ENCODE measurements at regions of chr15 and their contacts with region 1.

Region 1: DNA sequence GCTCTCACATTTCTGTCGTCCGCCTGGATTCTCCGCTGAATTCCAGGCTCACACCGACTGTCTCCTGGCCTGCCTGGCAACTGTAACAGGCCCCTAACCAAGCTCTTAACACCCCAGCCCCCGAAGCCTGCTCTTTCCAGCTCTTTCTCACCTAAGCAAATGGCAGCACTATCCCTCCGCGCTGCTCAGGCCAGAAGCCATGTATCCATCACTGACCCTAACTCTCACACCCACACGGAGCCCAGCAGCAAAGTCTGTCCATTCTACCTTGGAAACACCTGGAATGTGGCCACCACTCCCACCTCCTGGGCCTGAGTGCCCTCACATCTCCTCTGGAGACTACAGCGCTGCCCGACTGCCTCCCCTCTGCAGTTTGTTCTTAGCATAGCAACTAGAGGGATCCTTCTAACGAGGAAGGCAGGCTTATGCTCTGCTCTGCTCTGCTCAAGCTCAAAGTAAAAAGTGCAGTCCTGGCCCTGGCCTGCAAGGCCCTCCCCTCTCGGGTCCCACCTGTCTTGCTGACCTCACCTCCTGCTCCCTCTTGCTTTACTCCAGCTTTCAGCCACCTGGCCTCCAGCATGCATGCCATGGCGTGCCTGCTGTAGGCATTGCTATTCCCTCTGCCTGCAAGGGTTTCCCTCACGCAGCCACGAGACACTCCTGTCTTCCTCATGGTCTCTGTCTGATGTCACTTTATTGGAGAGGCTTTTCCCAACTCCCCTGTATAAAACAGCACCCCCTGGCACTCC is 27.2 kb downstream of the FEM1B start:
- DNase-seq: peak in 1 of 2 experiments; percentile 63
- H3K4me3 ChIP-seq: no peak overlapping the region
- H3K27ac ChIP-seq: no peak overlapping the region
- H3K4me1 ChIP-seq: peaks cover 7 to 23% (median 17%) of the 10 kb centered on the region in 4 experiments
- H3K27me3 ChIP-seq: no peaks in the 10 kb centered on the region
- CTCF ChIP-seq: peak; percentile 36 to 69 (median 47)
- EP300 ChIP-seq: no peak
- POLR2A ChIP-seq: no peak; a peak in 1 of 3 replicates
- RAD21 ChIP-seq: peak; percentile 31 to 55

Region 2: GRCh38 chr15:68252925-68253534 is 51.7 kb before region 1 on chr15:
- CTCF ChIA-PET with region 1: interaction called, 199 read pairs
- POLR2A ChIA-PET with region 1: interaction called, 6 read pairs
- DNase-seq: no peak
- H3K4me3 ChIP-seq: no peak overlapping the region
- H3K27ac ChIP-seq: no peak overlapping the region
- H3K4me1 ChIP-seq: peaks cover 0 to 8% (median 6%) of the 10 kb centered on the region in 4 experiments; a peak in 4 of 7 replicates
- H3K27me3 ChIP-seq: no peaks in the 10 kb centered on the region
- CTCF ChIP-seq: peak in 2 of 3 experiments; percentile 72 to 83; a peak in 3 of 4 replicates
- EP300 ChIP-seq: no peak
- POLR2A ChIP-seq: no peak
- RAD21 ChIP-seq: peak; percentile 91 to 93

Region 3: GRCh38 chr15:68277603-68278344 is 27.0 kb before region 1 on chr15 and contains the start of gene FEM1B:
- CTCF ChIA-PET with region 1: interaction called, 15 read pairs
- POLR2A ChIA-PET with region 1: interaction called, 37 read pairs
- DNase-seq: peak; percentile 75 to 92
- H3K4me3 ChIP-seq: peak within 1 kb of the TSS; percentile 78 to 99 (median 89)
- H3K27ac ChIP-seq: peak within 1 kb of the TSS; percentile 94
- H3K4me1 ChIP-seq: peaks cover 5 to 18% (median 14%) of the 10 kb centered on the region in 4 experiments; a peak in 6 of 7 replicates
- H3K27me3 ChIP-seq: no peaks in the 10 kb centered on the region
- CTCF ChIP-seq: peak in 1 of 3 experiments; percentile 8; a peak in 1 of 4 replicates
- EP300 ChIP-seq: peak in 1 of 2 experiments; percentile 68; a peak in 1 of 3 replicates
- POLR2A ChIP-seq: peak; percentile 54 to 88; a peak in 2 of 3 replicates
- RAD21 ChIP-seq: no peak
- total RNA-seq, gene FEM1B: 72.9 and 83.8 TPM in 2 replicates

Region 4: GRCh38 chr15:68341760-68342725 is 37.3 kb after region 1 on chr15:
- CTCF ChIA-PET with region 1: interaction called, 28 read pairs
- POLR2A ChIA-PET with region 1: no interaction called
- DNase-seq: no peak
- H3K4me3 ChIP-seq: no peak overlapping the region
- H3K27ac ChIP-seq: no peak overlapping the region
- H3K4me1 ChIP-seq: no peaks in the 10 kb centered on the region; a peak in 1 of 7 replicates
- H3K27me3 ChIP-seq: no peaks in the 10 kb centered on the region
- CTCF ChIP-seq: no peak
- EP300 ChIP-seq: no peak
- POLR2A ChIP-seq: no peak
- RAD21 ChIP-seq: no peak

Region 5: DNA sequence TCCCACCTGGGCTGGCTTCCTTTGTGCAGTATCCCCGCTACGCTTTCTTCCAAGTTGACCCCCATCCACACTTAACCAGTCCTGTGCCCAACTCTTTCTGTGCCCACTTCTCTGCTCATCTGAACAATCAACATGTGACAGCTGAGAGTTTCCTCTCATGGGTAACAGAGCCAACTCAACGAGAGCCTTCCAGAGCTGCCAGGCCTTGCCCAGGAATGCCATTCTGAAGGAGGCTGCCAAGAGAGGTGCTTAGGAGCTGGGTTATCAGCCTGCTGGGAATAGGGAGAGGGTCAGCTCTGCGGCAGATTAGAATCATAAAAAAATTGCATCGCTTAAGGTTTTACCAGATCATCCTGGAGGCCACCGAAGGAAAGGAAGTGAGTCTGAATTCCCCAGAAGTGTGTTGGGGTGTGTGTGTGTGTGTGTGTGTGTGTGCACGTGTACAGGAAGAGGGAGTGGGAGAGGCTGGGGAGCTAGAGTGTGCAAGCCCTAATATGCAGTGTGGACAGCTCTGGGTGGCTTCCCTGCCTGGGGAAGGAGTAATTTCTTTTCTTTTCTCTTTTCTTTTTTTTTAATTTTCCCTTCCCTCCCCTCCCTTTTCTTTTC is 60.5 kb after region 1 on chr15:
- CTCF ChIA-PET with region 1: interaction called, 44 read pairs
- POLR2A ChIA-PET with region 1: no interaction called
- DNase-seq: no peak
- H3K4me3 ChIP-seq: no peak overlapping the region
- H3K27ac ChIP-seq: no peak overlapping the region
- H3K4me1 ChIP-seq: no peaks in the 10 kb centered on the region; a peak in 1 of 7 replicates
- H3K27me3 ChIP-seq: no peaks in the 10 kb centered on the region
- CTCF ChIP-seq: no peak
- EP300 ChIP-seq: no peak
- POLR2A ChIP-seq: no peak
- RAD21 ChIP-seq: no peak

Region 6: GRCh38 chr15:68383161-68384074 is 78.7 kb after region 1 on chr15:
- CTCF ChIA-PET with region 1: interaction called, 16 read pairs
- POLR2A ChIA-PET with region 1: interaction called, 3 read pairs
- DNase-seq: peak in 1 of 2 experiments; percentile 55
- H3K4me3 ChIP-seq: no peak overlapping the region
- H3K27ac ChIP-seq: no peak overlapping the region
- H3K4me1 ChIP-seq: no peaks in the 10 kb centered on the region
- H3K27me3 ChIP-seq: no peaks in the 10 kb centered on the region
- CTCF ChIP-seq: peak in 2 of 3 experiments; percentile 67 to 79; a peak in 3 of 4 replicates
- EP300 ChIP-seq: no peak
- POLR2A ChIP-seq: no peak
- RAD21 ChIP-seq: peak; percentile 61 to 72

Region 7: DNA sequence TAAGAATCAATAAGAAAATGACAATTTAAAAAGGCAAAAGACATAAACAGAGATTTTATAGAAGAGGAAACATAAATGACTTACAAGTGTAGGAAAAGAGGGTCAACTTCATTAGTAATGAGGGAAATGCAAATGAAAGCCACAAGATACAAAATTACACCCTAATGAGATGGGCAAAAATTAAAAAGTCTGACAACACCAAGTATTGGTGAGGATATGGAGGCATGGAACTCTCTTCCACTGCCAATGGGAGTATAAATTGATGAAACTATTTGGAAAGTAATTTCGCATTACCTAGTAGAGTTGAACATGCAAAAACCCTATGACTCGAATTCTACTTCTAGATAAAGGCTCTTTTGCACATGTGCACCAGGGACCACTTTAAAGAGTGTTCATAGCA is 155.4 kb after region 1 on chr15:
- CTCF ChIA-PET with region 1: no interaction called
- POLR2A ChIA-PET with region 1: no interaction called
- DNase-seq: no peak
- H3K4me3 ChIP-seq: no peak overlapping the region
- H3K27ac ChIP-seq: no peak overlapping the region
- H3K4me1 ChIP-seq: no peaks in the 10 kb centered on the region
- H3K27me3 ChIP-seq: no peaks in the 10 kb centered on the region; a peak in 1 of 7 replicates
- CTCF ChIP-seq: no peak
- EP300 ChIP-seq: no peak
- POLR2A ChIP-seq: no peak
- RAD21 ChIP-seq: no peak

Region 8: GRCh38 chr15:68550481-68551295 is 245.9 kb after region 1 on chr15:
- CTCF ChIA-PET with region 1: interaction called, 22 read pairs
- POLR2A ChIA-PET with region 1: no interaction called
- DNase-seq: peak; percentile 44 to 97
- H3K4me3 ChIP-seq: no peak overlapping the region
- H3K27ac ChIP-seq: no peak overlapping the region
- H3K4me1 ChIP-seq: no peaks in the 10 kb centered on the region
- H3K27me3 ChIP-seq: no peaks in the 10 kb centered on the region; a peak in 1 of 7 replicates
- CTCF ChIP-seq: peak; percentile 73 to 96 (median 87)
- EP300 ChIP-seq: no peak
- POLR2A ChIP-seq: no peak
- RAD21 ChIP-seq: peak; percentile 92 to 97

Region 9: GRCh38 chr15:68608206-68608843 is 303.6 kb after region 1 on chr15:
- CTCF ChIA-PET with region 1: no interaction called
- POLR2A ChIA-PET with region 1: no interaction called
- DNase-seq: no peak
- H3K4me3 ChIP-seq: no peak overlapping the region
- H3K27ac ChIP-seq: no peak overlapping the region
- H3K4me1 ChIP-seq: peaks cover 6 to 21% (median 11%) of the 10 kb centered on the region in 4 experiments; a peak in 6 of 7 replicates
- H3K27me3 ChIP-seq: no peaks in the 10 kb centered on the region; a peak in 2 of 7 replicates
- CTCF ChIP-seq: no peak
- EP300 ChIP-seq: no peak
- POLR2A ChIP-seq: no peak
- RAD21 ChIP-seq: no peak

Region 10: GRCh38 chr15:68704496-68705021 is 399.8 kb after region 1 on chr15:
- CTCF ChIA-PET with region 1: no interaction called
- POLR2A ChIA-PET with region 1: no interaction called
- DNase-seq: no peak
- H3K4me3 ChIP-seq: no peak overlapping the region
- H3K27ac ChIP-seq: no peak overlapping the region
- H3K4me1 ChIP-seq: peaks cover 2 to 15% (median 10%) of the 10 kb centered on the region in 4 experiments; a peak in 6 of 7 replicates
- H3K27me3 ChIP-seq: 0 out of 7 replicates have a peak, but pooled peaks cover 0 to 3% (median 0%) of the 10 kb centered on the region in 4 experiments
- CTCF ChIP-seq: no peak
- EP300 ChIP-seq: no peak
- POLR2A ChIP-seq: no peak
- RAD21 ChIP-seq: no peak